CD14-positive monocyte (primary cell): ENCODE measurements at regions of chr20 and their contacts with region 1.

Region 1: GRCh38 chr20:35718972-35719635 is 19.9 kb downstream of the ROMO1 start:
- DNase-seq: no peak
- H3K4me3 ChIP-seq: no peak overlapping the region
- H3K4me3 Mint-ChIP-seq: no peak overlapping the region
- H3K27ac ChIP-seq: no peak overlapping the region
- H3K27ac Mint-ChIP-seq: peak overlapping the region in 2 of 7 donors; percentile 12 to 23
- H3K4me1 ChIP-seq: no peaks in the 10 kb centered on the region
- H3K4me1 Mint-ChIP-seq: no peaks in the 10 kb centered on the region
- H3K27me3 ChIP-seq: no peaks in the 10 kb centered on the region
- H3K27me3 Mint-ChIP-seq: peaks cover 0 to 2% (median 0%) of the 10 kb centered on the region in 3 donors
- CTCF ChIP-seq: no peak

Region 2: DNA sequence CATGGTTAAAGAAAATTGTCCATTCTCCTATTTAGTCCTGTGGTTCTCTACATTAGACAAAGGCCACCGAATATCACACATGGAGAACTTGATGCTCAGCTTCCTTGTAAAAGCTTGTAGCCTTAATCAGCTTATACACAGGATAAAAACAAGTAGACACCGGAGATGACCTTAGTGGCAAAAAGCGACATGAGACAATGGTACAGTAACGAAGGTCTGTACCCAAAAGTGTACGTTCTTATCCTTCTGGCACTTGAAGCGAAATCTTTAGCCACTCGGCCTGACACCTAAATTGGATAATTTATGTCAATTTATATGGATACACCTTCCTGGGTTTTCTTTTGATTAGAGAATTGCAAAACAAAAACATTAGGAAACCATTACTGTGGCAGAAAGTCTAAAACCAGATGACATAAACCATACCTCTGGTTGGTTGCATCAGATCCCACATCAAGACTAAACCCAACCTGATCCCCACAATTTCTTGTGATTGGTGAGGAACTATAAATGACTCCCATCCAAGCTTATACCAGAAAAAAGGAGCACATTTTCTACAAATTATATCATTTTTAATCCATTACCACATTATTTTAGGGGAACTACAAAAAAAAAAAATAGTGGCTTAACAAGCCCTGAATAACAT is 16.8 kb after region 1 on chr20:
- intact Hi-C with region 1: loop called in 1 of 2 experiments (anchors 2 kb)
- DNase-seq: no peak
- H3K4me3 ChIP-seq: no peak overlapping the region
- H3K4me3 Mint-ChIP-seq: no peak overlapping the region
- H3K27ac ChIP-seq: no peak overlapping the region
- H3K27ac Mint-ChIP-seq: peak overlapping the region in 1 of 7 donors; percentile 15
- H3K4me1 ChIP-seq: peaks cover 14 to 36% of the 10 kb centered on the region in 2 donors
- H3K4me1 Mint-ChIP-seq: peaks cover 23% of the 10 kb centered on the region
- H3K27me3 ChIP-seq: no peaks in the 10 kb centered on the region
- H3K27me3 Mint-ChIP-seq: no peaks in the 10 kb centered on the region
- CTCF ChIP-seq: no peak

Region 3: GRCh38 chr20:35771689-35772562 is 52.8 kb after region 1 on chr20 and contains the start of gene PHF20:
- intact Hi-C with region 1: no loop called
- DNase-seq: peak; percentile 97 to 99 (median 99)
- H3K4me3 ChIP-seq: peak within 1 kb of the TSS; percentile 73 to 98 (median 94)
- H3K4me3 Mint-ChIP-seq: peak within 1 kb of the TSS; percentile 88 to 90
- H3K27ac ChIP-seq: peak within 1 kb of the TSS; percentile 87 to 95
- H3K27ac Mint-ChIP-seq: peak within 1 kb of the TSS; percentile 98 to 100 (median 99)
- H3K4me1 ChIP-seq: peaks cover 64 to 74% of the 10 kb centered on the region in 2 donors
- H3K4me1 Mint-ChIP-seq: peaks cover 72% of the 10 kb centered on the region
- H3K27me3 ChIP-seq: no peaks in the 10 kb centered on the region
- H3K27me3 Mint-ChIP-seq: peaks cover 0 to 6% (median 3%) of the 10 kb centered on the region in 3 donors
- CTCF ChIP-seq: no peak
- polyA plus RNA-seq, gene PHF20: 54.7 to 78.2 (median 73.6) TPM

Region 4: DNA sequence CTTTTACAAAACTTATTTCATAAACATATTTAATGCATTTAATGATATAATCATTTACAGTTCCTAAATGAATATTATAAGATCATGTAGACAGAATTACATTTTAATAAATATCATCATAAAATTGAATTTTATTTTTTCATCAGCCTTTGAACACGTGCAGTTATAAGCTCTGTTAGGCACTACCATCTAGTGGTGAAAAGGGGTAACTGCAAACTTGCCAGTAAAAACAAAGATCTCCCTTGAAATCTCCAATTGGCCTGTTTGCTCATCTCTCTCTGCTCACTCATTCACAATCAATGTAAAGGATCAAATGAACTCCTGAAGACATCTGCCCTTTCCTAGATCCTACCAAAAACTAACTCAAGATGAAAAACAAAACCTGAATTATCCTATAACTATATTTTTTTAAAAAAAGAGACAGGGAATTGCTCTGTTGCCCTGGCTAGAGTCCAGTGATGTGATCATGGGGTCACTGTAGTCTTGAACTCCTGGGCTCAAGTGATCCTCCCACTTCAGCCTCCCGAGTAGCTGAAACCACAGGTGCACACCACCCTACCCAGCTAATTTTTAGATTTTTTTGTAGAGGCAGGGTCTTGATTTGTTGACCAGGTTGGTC is 1200.7 kb after region 1 on chr20:
- intact Hi-C with region 1: loop called in 1 of 2 experiments (anchors 10 kb)
- DNase-seq: peak; percentile 37 to 56 (median 47)
- H3K4me3 ChIP-seq: no peak overlapping the region
- H3K4me3 Mint-ChIP-seq: no peak overlapping the region
- H3K27ac ChIP-seq: no peak overlapping the region
- H3K27ac Mint-ChIP-seq: peak overlapping the region; percentile 6 to 84 (median 50)
- H3K4me1 ChIP-seq: peaks cover 0 to 6% of the 10 kb centered on the region in 2 donors
- H3K4me1 Mint-ChIP-seq: peaks cover 12% of the 10 kb centered on the region
- H3K27me3 ChIP-seq: no peaks in the 10 kb centered on the region
- H3K27me3 Mint-ChIP-seq: no peaks in the 10 kb centered on the region
- CTCF ChIP-seq: peak; percentile 96